ENCODE measurements at regions of chr7 and their contacts with region 1.

Region 1: DNA sequence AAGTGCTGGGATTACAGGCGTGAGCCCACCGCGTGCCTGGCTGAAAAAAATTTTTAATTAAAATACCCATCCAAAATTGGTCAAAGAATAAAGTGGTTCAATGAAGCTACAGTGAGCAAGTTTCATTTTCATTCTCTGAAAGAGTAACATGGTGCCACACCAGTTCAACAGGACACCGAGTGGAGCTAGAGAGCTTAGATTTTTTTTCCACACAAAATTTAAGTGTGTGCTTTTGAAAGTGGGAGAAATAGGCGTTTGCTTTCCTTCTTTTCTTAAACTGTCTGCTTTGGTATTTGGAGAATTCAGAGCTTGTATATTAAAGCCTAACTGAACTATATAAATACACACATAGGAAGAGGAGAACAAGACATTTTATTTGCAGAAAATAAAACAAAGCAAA is 43.4 kb downstream of the BPGM start:
- DNase-seq: no peak
- ATAC-seq: peak in 7 of 8 donors; percentile 80 to 92 (median 87)
- H3K4me3 ChIP-seq: peak overlapping the region in 8 of 10 donors; percentile 17 to 48 (median 42)
- H3K27ac ChIP-seq: peak overlapping the region in 8 of 10 donors; percentile 26 to 74 (median 54)
- H3K4me1 ChIP-seq: peaks cover 0 to 34% (median 12%) of the 10 kb centered on the region in 9 donors
- H3K27me3 ChIP-seq: no peaks in the 10 kb centered on the region
- CTCF ChIP-seq: peak; percentile 27 to 84 (median 57)

Region 2: DNA sequence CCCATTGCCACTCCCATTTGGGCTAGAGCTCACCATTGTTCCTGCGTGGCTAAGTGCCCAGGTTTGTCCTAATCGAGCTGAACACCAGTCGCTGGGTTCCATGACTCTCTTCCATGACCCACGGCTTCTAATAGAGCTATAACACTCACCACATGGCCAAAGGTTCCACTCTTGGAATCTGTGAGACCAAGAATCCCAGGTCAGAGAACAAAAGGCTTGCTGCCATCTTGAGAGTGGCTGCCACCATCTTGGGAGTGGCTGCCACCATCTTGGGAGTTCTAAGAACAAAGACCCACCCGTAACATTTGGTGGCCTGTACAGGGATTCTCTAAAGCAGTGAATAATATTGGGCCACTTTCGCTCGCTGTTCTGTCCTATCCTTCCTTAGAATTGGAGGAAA is 104.1 kb before region 1 on chr7:
- intact Hi-C with region 1: no loop called
- DNase-seq: no peak
- ATAC-seq: no peak
- H3K4me3 ChIP-seq: no peak overlapping the region
- H3K27ac ChIP-seq: no peak overlapping the region
- H3K4me1 ChIP-seq: no peaks in the 10 kb centered on the region
- H3K27me3 ChIP-seq: no peaks in the 10 kb centered on the region
- CTCF ChIP-seq: no peak

Region 3: GRCh38 chr7:134750083-134751062 is 60.4 kb after region 1 on chr7:
- intact Hi-C with region 1: loop called in 4 of 10 experiments (anchors 2 to 10 kb)
- DNase-seq: peak; percentile 27 to 49
- ATAC-seq: peak; percentile 45 to 78 (median 59)
- H3K4me3 ChIP-seq: peak overlapping the region in 1 of 10 donors; percentile 7
- H3K27ac ChIP-seq: no peak overlapping the region
- H3K4me1 ChIP-seq: peaks cover 0 to 6% (median 0%) of the 10 kb centered on the region in 9 donors
- H3K27me3 ChIP-seq: no peaks in the 10 kb centered on the region
- CTCF ChIP-seq: peak; percentile 54 to 77 (median 66)

Region 4: GRCh38 chr7:134831862-134832261 is 141.8 kb after region 1 on chr7:
- intact Hi-C with region 1: loop called in 1 of 10 experiments (anchors 10 kb)
- DNase-seq: peak; percentile 44 to 50
- ATAC-seq: peak in 3 of 8 donors; percentile 28 to 47 (median 29)
- H3K4me3 ChIP-seq: peak overlapping the region in 4 of 10 donors; percentile 4 to 21 (median 14)
- H3K27ac ChIP-seq: peak overlapping the region in 7 of 10 donors; percentile 34 to 83 (median 59)
- H3K4me1 ChIP-seq: peaks cover 2 to 99% (median 65%) of the 10 kb centered on the region in 9 donors
- H3K27me3 ChIP-seq: no peaks in the 10 kb centered on the region
- CTCF ChIP-seq: no peak

Region 5: GRCh38 chr7:134932707-134933370 is 242.8 kb after region 1 on chr7:
- intact Hi-C with region 1: loop called in 1 of 10 experiments (anchors 10 kb)
- DNase-seq: peak; percentile 53 to 54
- ATAC-seq: peak; percentile 56 to 85 (median 80)
- H3K4me3 ChIP-seq: peak overlapping the region in 5 of 10 donors; percentile 2 to 16 (median 8)
- H3K27ac ChIP-seq: peak overlapping the region in 9 of 10 donors; percentile 41 to 81 (median 67)
- H3K4me1 ChIP-seq: peaks cover 0 to 81% (median 54%) of the 10 kb centered on the region in 9 donors
- H3K27me3 ChIP-seq: no peaks in the 10 kb centered on the region
- CTCF ChIP-seq: no peak

Region 6: DNA sequence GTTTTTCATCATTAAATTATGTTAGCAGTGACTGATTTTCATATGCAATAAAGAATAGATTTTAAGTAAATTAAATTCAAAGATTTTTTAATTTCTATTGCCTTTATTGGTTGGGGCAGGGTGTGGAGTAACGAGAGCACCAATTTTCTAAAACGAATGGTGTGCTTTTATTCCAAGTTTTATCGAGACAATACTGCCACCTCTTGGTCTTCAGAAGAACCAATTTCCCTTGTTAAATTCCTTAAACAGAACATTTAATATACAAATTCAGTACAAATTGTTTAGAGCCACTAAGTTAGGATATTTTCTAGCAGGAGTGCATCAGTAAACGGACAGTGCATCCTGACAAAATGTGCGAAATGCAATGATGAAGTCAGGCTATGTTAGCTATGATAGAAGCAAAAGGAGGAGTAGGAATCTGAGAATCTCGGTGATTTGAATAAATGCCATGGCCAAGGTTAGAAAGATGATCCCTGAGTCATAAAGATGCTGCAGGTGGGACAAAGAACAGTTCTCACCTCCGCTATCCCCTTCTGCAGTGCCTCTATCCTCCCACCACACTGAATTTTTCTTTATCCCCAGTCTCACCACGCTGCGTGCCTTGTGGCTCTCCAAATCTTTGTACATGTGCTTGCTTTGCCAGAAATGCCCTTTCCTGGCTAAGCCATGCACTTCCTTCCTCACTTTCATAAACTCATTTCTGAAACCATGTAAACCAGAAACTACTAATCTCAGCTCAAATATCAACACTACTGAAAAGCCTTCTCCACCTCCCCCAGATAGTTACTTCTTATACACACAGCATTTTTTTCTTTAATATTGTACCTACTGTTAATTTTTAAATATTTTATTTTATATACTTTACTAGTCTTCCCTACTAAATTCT is 264.4 kb after region 1 on chr7:
- intact Hi-C with region 1: loop called in 9 of 10 experiments (anchors 2 to 10 kb)
- DNase-seq: no peak
- ATAC-seq: peak in 4 of 8 donors; percentile 23 to 55 (median 36)
- H3K4me3 ChIP-seq: no peak overlapping the region
- H3K27ac ChIP-seq: peak overlapping the region in 1 of 10 donors; percentile 16
- H3K4me1 ChIP-seq: no peaks in the 10 kb centered on the region
- H3K27me3 ChIP-seq: no peaks in the 10 kb centered on the region
- CTCF ChIP-seq: peak; percentile 25 to 72 (median 59)

Region 7: GRCh38 chr7:135274495-135275268 is 584.7 kb after region 1 on chr7:
- intact Hi-C with region 1: loop called in 3 of 10 experiments (anchors 10 kb)
- DNase-seq: peak; percentile 31 to 53
- ATAC-seq: peak; percentile 47 to 81 (median 70)
- H3K4me3 ChIP-seq: no peak overlapping the region
- H3K27ac ChIP-seq: no peak overlapping the region
- H3K4me1 ChIP-seq: peaks cover 0 to 5% (median 0%) of the 10 kb centered on the region in 9 donors
- H3K27me3 ChIP-seq: peaks cover 0 to 13% (median 7%) of the 10 kb centered on the region in 7 donors
- CTCF ChIP-seq: peak; percentile 78 to 93 (median 89)